RWPE1 (cell line): ENCODE measurements at regions of chr5 and their contacts with region 1.

Region 1: GRCh38 chr5:111530298-111530740 is 18.0 kb upstream of the STARD4 start:
- DNase-seq: peak; percentile 37
- H3K27ac ChIP-seq: peak overlapping the region; percentile 59
- CTCF ChIP-seq: no peak

Region 2: DNA sequence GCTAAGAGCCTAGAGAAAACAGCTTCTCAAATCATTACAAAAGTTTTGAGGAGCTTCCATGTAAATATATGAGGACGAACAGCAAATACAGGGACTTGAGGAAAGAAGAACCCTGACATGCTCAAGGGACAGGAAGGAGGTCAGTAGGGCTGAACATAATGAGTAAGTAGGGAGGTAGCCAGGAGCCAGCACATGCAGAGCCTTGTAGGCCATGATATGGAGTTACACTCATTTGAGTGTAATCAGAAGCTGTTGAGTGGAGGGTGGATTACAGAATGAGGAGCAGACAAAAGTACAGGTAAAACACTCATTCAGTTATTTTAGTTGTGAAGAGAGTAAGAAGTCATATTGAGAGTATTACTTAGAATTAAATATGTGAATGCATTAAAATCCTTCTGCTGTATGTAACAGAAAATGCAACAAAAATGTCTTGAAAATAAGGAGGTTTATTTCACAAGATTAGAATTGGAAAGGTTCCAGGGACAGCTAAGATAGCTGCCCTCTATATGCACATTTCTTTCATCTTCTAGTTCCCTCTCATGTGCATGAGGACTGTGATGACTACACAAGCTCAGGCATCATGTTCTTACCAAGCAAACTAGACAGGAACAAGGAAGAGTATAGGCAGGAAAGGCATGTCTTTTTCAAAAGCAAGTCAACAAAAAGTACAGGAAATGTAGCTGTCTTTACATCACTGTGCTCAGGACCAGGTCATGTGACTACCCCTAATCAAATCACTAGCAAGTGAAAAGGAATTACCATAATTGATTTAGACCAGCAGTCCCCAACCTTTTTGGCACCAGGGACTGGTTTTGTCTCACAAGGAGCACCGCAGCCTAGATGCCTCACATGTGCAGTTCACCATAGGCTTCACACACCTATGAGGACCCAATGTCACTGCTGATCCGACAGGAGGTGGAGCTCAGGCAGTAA is 891.1 kb before region 1 on chr5:
- CTCF ChIA-PET with region 1: no interaction called
- POLR2A ChIA-PET with region 1: no interaction called
- DNase-seq: no peak
- H3K27ac ChIP-seq: no peak overlapping the region
- CTCF ChIP-seq: no peak

Region 3: GRCh38 chr5:111472579-111472978 is 57.7 kb before region 1 on chr5:
- CTCF ChIA-PET with region 1: no interaction called
- POLR2A ChIA-PET with region 1: no interaction called
- DNase-seq: no peak
- H3K27ac ChIP-seq: no peak overlapping the region
- CTCF ChIP-seq: no peak

Region 4: DNA sequence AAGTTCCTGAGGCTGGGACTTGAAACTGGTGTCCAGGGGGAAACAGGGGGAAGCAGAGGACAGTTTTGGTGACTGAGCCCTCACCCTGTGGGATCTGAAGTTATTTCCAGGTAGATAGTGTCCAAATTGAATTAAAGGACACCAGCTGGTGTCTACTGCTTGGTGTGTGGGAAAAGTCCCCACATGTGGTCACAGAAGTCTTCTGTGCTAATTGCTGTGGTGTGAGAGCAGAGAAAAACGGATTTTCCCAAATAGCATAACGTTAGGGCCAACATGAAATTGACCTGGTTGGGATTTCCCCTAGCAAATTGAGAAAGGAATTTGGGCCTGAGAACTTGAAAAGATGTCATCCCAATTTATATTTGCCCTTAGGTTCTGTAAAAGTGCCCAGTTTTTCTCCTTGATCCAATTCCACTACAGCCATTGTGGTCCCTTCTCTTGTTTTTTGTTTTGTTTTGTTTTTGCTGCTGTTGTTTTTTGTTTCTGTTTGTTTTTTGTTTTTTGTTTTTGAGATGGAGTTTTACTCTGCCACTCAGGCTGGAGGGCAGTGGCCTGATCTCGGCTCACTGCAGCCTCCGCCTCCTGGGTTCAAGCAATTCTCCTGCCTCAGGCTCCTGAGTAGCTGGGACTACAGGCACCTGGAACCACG is 12.3 kb before region 1 on chr5:
- CTCF ChIA-PET with region 1: interaction called, 12 read pairs
- POLR2A ChIA-PET with region 1: no interaction called
- DNase-seq: no peak
- H3K27ac ChIP-seq: no peak overlapping the region
- CTCF ChIP-seq: no peak

Region 5: DNA sequence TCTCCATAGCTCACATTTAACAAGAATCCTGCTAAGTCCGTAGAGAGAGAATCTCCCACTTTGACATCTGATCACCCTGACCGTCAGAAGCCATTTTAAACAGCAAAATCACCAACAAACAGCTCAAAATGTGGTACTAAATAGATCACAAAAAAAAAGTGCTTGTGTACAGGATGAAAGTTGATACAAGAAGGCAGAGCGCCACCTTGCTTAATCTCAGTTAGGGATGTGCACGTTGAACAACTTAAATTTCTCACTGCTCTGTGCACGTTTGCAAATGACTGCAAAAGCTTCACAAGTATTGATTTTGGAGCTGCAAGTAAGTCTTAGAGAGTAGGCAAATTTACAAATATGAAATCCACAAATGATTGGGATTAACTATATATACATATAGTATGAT is 289.8 kb after region 1 on chr5:
- CTCF ChIA-PET with region 1: no interaction called
- POLR2A ChIA-PET with region 1: no interaction called
- DNase-seq: no peak
- H3K27ac ChIP-seq: no peak overlapping the region
- CTCF ChIP-seq: no peak

Region 6: GRCh38 chr5:112146323-112147226 is 616.3 kb after region 1 on chr5:
- CTCF ChIA-PET with region 1: interaction called, 19 read pairs
- POLR2A ChIA-PET with region 1: no interaction called
- DNase-seq: peak; percentile 77
- H3K27ac ChIP-seq: no peak overlapping the region
- CTCF ChIP-seq: peak; percentile 95